B cell (primary cell): ENCODE measurements at regions of chr12 and their contacts with region 1.

Region 1: DNA sequence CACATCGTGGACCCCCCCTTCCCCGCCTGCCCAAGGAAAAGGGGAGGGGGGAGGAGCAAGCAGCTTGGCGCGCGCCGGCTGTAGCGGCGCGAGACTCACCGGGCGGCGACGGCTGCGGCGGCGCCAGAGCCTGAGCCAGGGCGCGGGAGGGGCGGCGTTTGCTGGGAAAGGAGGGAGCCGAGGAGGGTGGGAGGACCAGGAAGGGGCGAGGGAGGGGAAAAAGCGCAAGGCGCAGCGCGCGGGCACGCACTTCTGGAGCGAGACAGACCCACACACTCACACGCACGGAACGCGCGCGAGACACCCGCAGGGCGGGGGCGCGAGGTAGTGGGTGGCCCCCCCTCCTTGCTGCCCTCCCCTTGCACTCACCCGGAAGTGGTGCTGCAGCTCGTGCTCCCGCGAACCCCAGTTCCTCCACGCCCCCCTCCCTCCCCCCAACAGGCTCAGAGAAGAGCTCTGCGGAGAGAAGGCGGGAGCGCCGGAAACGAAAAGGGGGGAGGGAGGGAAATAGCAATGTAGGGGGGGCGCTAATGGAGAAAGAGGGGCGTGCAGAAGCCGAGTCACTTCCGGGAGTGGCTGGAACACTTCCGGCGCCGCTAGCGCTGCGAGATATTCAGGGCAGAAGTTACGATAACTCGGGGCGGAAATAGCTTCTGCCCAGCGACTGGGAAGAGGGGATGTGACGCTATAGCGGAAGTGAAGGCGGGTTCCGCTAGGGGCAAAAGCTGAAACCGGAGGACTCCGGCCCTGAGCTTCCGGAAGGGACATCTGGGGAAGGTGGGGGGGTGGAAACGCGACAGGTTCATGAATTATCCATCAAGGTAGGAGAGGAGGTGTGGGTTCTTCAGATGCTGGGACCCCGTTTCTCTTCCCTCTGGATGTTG is at the start of gene ZNF384:
- DNase-seq: peak; percentile 99
- ATAC-seq: peak; percentile 76
- H3K4me3 ChIP-seq: peak within 1 kb of the TSS; percentile 53 to 95 (median 93)
- H3K4me3 Mint-ChIP-seq: peak within 1 kb of the TSS; percentile 94
- H3K27ac ChIP-seq: peak within 1 kb of the TSS; percentile 75 to 91
- H3K27ac Mint-ChIP-seq: peak within 1 kb of the TSS; percentile 97
- H3K4me1 ChIP-seq: peaks cover 28 to 29% of the 10 kb centered on the region in 2 donors
- H3K4me1 Mint-ChIP-seq: peaks cover 55% of the 10 kb centered on the region
- H3K27me3 ChIP-seq: no peaks in the 10 kb centered on the region
- H3K27me3 Mint-ChIP-seq: no peaks in the 10 kb centered on the region
- CTCF ChIP-seq: no peak
- total RNA-seq, gene ZNF384: 108 and 115 TPM in 2 replicates

Region 2: GRCh38 chr12:6607751-6608591 is 81.3 kb before region 1 on chr12:
- CTCF ChIA-PET with region 1: interaction called, 18 read pairs
- POLR2A ChIA-PET with region 1: interaction called, 12 read pairs
- intact Hi-C with region 1: loop called (anchors 1 kb)
- DNase-seq: peak; percentile 90
- ATAC-seq: peak; percentile 20
- H3K4me3 ChIP-seq: no peak overlapping the region
- H3K4me3 Mint-ChIP-seq: no peak overlapping the region
- H3K27ac ChIP-seq: peak overlapping the region; percentile 90 to 95
- H3K27ac Mint-ChIP-seq: no peak overlapping the region
- H3K4me1 ChIP-seq: peaks cover 56 to 63% of the 10 kb centered on the region in 2 donors
- H3K4me1 Mint-ChIP-seq: peaks cover 58% of the 10 kb centered on the region
- H3K27me3 ChIP-seq: no peaks in the 10 kb centered on the region
- H3K27me3 Mint-ChIP-seq: no peaks in the 10 kb centered on the region
- CTCF ChIP-seq: no peak

Region 3: GRCh38 chr12:6632026-6632983 is 56.9 kb before region 1 on chr12:
- CTCF ChIA-PET with region 1: interaction called, 10 read pairs
- POLR2A ChIA-PET with region 1: interaction called, 6 read pairs
- intact Hi-C with region 1: loop called (anchors 2 kb)
- DNase-seq: peak; percentile 83
- ATAC-seq: peak; percentile 44
- H3K4me3 ChIP-seq: peak overlapping the region; percentile 12 to 70 (median 55)
- H3K4me3 Mint-ChIP-seq: peak overlapping the region; percentile 97
- H3K27ac ChIP-seq: peak overlapping the region; percentile 85 to 86
- H3K27ac Mint-ChIP-seq: peak overlapping the region; percentile 99
- H3K4me1 ChIP-seq: peaks cover 66 to 88% of the 10 kb centered on the region in 2 donors
- H3K4me1 Mint-ChIP-seq: peaks cover 73% of the 10 kb centered on the region
- H3K27me3 ChIP-seq: no peaks in the 10 kb centered on the region
- H3K27me3 Mint-ChIP-seq: no peaks in the 10 kb centered on the region
- CTCF ChIP-seq: no peak

Region 4: DNA sequence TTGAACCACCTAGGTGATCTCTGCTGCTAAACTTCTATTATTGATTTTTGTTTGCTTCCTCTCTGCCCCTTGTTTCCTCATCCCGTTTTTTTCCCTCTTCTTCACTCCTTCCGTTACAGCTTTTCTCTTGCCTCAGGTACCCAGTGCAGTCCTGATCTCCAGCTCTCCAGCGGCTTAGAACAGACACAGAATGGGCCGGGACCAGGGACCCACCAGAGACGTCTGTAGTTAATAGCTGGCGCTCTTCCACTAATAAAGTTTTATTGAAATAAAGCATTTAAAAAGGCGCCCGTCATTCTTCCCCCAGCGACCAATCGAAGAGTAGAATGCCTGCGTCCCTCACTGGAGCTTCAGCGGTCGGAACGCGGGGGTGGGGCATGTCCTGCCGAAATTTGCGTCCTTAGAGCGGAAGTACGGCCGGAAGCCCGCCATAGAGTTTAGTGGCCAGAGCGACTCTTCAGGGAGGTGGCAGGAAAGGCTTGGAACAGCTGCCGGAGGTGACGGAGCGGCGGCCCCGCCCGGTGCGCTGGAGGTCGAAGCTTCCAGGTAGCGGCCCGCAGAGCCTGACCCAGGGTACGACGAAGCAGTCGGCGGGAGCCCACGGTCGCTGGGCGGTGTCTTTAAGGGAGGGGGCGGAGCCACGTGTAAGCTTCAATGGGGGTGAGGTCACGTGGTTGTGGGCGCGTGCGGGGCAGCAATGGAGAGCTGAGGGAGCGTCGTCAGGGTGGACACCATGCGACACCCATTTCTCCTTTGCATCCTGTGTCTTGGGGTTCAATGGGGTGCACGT is 34.6 kb after region 1 on chr12 and contains the start of gene COPS7A:
- CTCF ChIA-PET with region 1: interaction called, 34 read pairs
- POLR2A ChIA-PET with region 1: interaction called, 51 read pairs
- intact Hi-C with region 1: no loop called
- DNase-seq: peak; percentile 98
- ATAC-seq: peak; percentile 89
- H3K4me3 ChIP-seq: peak within 1 kb of the TSS; percentile 53 to 65 (median 63)
- H3K4me3 Mint-ChIP-seq: peak within 1 kb of the TSS; percentile 91
- H3K27ac ChIP-seq: peak within 1 kb of the TSS; percentile 81 to 86
- H3K27ac Mint-ChIP-seq: peak within 1 kb of the TSS; percentile 94
- H3K4me1 ChIP-seq: peaks cover 13 to 17% of the 10 kb centered on the region in 2 donors
- H3K4me1 Mint-ChIP-seq: peaks cover 19% of the 10 kb centered on the region
- H3K27me3 ChIP-seq: no peaks in the 10 kb centered on the region
- H3K27me3 Mint-ChIP-seq: no peaks in the 10 kb centered on the region
- CTCF ChIP-seq: no peak
- total RNA-seq, gene COPS7A: 28.3 and 29.4 TPM in 2 replicates

Region 5: GRCh38 chr12:6778574-6779550 is 89.6 kb after region 1 on chr12:
- CTCF ChIA-PET with region 1: interaction called, 5 read pairs
- POLR2A ChIA-PET with region 1: no interaction called
- intact Hi-C with region 1: loop called (anchors 2 kb)
- DNase-seq: peak; percentile 92
- ATAC-seq: peak; percentile 98
- H3K4me3 ChIP-seq: peak overlapping the region in 4 of 5 experiments; percentile 48 to 56 (median 50)
- H3K4me3 Mint-ChIP-seq: peak overlapping the region; percentile 85
- H3K27ac ChIP-seq: no peak overlapping the region
- H3K27ac Mint-ChIP-seq: peak overlapping the region; percentile 34
- H3K4me1 ChIP-seq: peaks cover 15% of the 10 kb centered on the region in 2 donors
- H3K4me1 Mint-ChIP-seq: peaks cover 11% of the 10 kb centered on the region
- H3K27me3 ChIP-seq: peaks cover 0 to 42% (median 28%) of the 10 kb centered on the region in 4 experiments
- H3K27me3 Mint-ChIP-seq: peaks cover 42% of the 10 kb centered on the region
- CTCF ChIP-seq: peak; percentile 90